WTC11 (cell line): ENCODE measurements at regions of chr2 and their contacts with region 1.

Region 1: GRCh38 chr2:208101716-208102631 is 22.4 kb downstream of the CRYGD start:
- DNase-seq: no peak
- ATAC-seq: peak; percentile 80
- H3K4me3 Mint-ChIP-seq: no peak overlapping the region
- H3K27ac Mint-ChIP-seq: no peak overlapping the region; the same call in 1 of the 2 replicates
- H3K4me1 Mint-ChIP-seq: peaks cover 35% of the 10 kb centered on the region
- H3K27me3 Mint-ChIP-seq: no peaks in the 10 kb centered on the region
- CTCF ChIP-seq: no peak

Region 2: GRCh38 chr2:208072250-208072892 is 29.6 kb before region 1 on chr2:
- CTCF ChIA-PET with region 1: interaction called, 10 read pairs
- POLR2A ChIA-PET with region 1: no interaction called
- DNase-seq: peak; percentile 72
- ATAC-seq: peak; percentile 94
- H3K4me3 Mint-ChIP-seq: no peak overlapping the region
- H3K27ac Mint-ChIP-seq: no peak overlapping the region
- H3K4me1 Mint-ChIP-seq: peaks cover 4% of the 10 kb centered on the region
- H3K27me3 Mint-ChIP-seq: no peaks in the 10 kb centered on the region
- CTCF ChIP-seq: peak; percentile 56; the same call in 1 of the 2 replicates

Region 3: DNA sequence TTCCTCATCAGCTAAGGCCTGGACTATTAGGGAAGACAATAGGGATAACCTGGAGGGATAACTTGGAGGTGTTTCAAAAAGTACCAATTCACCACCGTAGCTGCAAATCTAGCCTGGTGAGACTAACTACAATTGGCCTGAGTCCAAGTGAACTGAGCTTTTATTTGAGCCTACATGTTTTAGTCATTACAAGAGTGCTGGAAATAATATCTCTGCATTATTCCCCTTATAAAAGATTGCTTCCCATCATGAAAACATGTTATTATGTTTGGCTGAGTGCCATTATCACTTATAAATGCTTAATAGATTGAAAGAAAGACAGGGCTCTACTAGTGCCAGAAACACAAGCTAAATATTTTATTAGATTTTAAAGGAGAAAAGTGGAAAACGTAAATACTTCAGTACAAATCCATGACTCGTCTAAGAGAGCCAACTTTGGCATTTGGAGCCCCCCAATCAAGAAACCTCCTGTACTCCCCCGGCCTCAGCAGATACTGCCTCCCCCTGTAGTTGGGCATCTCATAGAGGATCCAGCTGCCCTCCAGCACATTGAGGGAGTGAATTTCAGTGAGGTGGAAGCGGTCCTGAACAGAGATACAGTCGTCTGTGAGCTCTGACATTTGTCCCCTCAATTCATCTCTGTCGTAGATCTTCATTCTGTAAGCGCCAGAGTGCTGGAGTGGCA is 40.4 kb after region 1 on chr2:
- CTCF ChIA-PET with region 1: interaction called, 30 read pairs
- POLR2A ChIA-PET with region 1: no interaction called
- DNase-seq: no peak
- ATAC-seq: no peak; the same call in 1 of the 2 replicates
- H3K4me3 Mint-ChIP-seq: no peak overlapping the region; the same call in 1 of the 2 replicates
- H3K27ac Mint-ChIP-seq: peak overlapping the region; percentile 90
- H3K4me1 Mint-ChIP-seq: peaks cover 31% of the 10 kb centered on the region
- H3K27me3 Mint-ChIP-seq: peaks cover 3% of the 10 kb centered on the region; the same call in 1 of the 2 replicates
- CTCF ChIP-seq: no peak

Region 4: DNA sequence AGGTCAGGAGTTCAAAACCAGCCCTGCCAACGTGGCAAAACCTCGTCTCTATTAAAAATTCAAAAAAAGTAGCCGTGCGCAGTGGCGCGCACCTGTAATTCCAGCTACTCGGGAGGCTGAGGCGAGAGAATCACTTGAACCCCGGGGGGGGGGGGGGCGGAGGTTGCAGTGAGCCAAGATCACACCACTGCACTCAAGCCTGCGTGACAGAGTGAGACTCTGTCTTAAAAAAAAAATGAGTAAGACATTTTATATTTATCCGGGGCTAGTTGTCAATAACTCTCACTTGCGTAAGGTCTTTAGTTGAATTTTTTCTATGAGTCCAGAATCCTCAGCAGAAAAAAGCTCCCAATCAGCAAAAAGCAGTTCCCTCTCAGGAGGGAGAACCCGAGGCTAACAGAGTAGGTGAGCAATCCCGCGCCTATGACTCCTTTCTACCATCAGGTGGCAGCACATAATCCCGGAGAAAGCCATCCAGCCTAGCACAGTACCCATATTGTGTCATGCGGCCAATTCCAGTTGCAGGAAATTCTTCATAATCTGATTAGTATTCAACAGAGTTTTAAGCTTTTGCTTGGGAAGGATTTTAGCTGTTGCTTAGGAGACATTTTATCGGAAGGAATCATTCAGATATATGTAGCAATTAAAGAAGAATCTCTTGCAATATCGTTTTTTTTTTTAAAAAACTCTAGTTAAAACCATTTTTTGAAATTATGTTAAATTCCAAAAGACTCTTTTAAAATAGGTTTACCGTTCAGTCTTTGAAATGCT is 73.3 kb after region 1 on chr2:
- CTCF ChIA-PET with region 1: interaction called, 28 read pairs
- POLR2A ChIA-PET with region 1: no interaction called
- DNase-seq: peak; percentile 76
- ATAC-seq: peak; percentile 98
- H3K4me3 Mint-ChIP-seq: no peak overlapping the region
- H3K27ac Mint-ChIP-seq: no peak overlapping the region
- H3K4me1 Mint-ChIP-seq: peaks cover 17% of the 10 kb centered on the region
- H3K27me3 Mint-ChIP-seq: no peaks in the 10 kb centered on the region
- CTCF ChIP-seq: peak; percentile 71

Region 5: DNA sequence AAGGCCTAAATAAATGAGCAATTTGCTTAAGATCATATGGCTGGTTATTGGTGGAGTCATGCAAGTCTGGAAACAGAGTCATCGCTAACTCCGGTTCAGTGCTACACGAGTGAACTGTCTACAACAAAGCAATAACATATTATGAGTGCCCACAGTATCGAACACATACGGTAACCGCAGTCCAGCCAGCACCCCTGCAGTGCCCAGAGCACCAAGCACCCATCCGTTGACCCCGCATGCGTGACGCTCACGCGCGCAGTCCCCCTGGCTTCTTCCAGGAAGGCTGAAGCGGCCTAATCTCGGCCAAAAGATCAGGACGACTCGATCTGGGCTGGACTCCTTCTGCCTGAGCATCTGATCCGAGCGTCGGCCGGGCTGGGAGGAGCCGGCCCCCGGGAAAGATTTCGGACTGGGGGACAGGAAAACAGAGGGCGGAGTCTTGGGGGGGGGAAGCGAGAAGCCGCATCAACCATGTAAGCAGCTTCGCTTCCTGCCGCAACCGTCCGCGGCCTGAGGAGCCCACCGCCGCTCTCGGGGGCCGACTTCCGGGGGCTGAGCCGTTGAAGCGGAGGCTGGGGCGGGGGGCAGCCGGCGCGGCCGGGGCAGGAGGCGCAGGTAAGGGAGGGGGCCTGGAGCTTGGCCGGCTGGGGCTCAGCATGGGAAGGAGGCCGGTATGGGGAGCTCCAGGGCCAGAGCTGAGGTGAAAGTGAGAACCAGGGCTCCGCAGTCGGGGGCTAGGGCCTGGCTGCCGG is 164.0 kb after region 1 on chr2 and contains the start of gene PIKFYVE:
- CTCF ChIA-PET with region 1: interaction called, 11 read pairs
- POLR2A ChIA-PET with region 1: no interaction called
- DNase-seq: peak; percentile 94
- ATAC-seq: peak; percentile 90
- H3K4me3 Mint-ChIP-seq: peak within 1 kb of the TSS; percentile 93
- H3K27ac Mint-ChIP-seq: peak within 1 kb of the TSS; percentile 97
- H3K4me1 Mint-ChIP-seq: peaks cover 28% of the 10 kb centered on the region
- H3K27me3 Mint-ChIP-seq: no peaks in the 10 kb centered on the region
- CTCF ChIP-seq: no peak
- total RNA-seq, gene PIKFYVE: 28.9 to 36.1 TPM (median 33.6 TPM) in 3 replicates